HepG2 (cell line): ENCODE measurements at regions of chr12 and their contacts with region 1.

Region 1: DNA sequence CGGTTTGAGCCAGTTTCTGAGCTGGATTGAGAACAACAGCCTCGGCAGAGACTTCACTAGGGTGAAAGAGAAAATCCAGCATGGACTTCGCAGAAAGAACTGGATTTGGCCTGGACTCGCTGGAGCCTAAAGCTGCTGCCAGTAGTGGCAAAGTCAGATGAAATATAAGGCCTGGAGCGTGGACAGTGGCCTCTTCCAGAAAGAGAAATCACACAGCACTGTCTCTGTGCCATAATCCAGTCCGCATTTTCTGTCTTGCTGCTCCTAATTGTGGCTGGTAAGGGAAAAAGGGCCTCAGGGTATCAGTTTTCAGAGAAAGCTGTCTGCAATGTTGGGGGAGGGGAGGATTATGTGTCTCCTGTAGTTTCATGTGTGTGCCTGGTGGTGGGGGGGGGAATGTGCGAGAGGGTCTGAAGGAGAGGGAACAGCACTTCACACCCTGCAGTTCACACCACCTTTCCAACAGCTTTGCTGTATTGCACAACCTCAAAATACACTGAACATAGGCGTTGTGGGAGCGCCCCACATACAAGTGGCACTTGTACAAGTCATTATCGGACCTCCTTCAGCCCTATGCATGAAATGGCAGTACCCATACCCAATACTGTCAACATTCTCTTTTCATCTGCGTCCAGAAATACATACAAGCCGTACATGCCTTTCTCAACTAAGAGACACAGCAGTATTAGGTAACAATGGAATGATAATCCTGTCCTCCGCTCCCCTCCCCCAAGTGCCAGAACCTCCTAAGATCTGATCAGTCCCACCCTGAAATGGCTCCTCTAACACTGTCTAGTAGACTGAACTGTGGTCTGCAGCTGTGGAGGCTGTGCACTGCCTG is 107.5 kb upstream of the ATF7IP start:
- DNase-seq: peak; percentile 95
- ATAC-seq: peak; percentile 86
- H3K4me3 ChIP-seq: peak overlapping the region; percentile 6 to 34 (median 29); a peak in 4 of 6 replicates
- H3K27ac ChIP-seq: peak overlapping the region; percentile 64
- H3K4me1 ChIP-seq: peaks cover 48% of the 10 kb centered on the region
- H3K27me3 ChIP-seq: no peaks in the 10 kb centered on the region
- CTCF ChIP-seq: 0 out of 2 replicates have a peak, but pooled peaks have one; percentile 4
- EP300 ChIP-seq: peak in 1 of 2 experiments; percentile 66; a peak in 1 of 4 replicates
- POLR2A ChIP-seq: no peak
- RAD21 ChIP-seq: peak; percentile 41; the same call in 1 of the 2 replicates

Region 2: GRCh38 chr12:14365294-14366208 is 107.6 kb after region 1 on chr12 and contains the start of gene ATF7IP:
- CTCF ChIA-PET with region 1: interaction called, 5 read pairs
- POLR2A ChIA-PET with region 1: interaction called, 7 read pairs
- in situ Hi-C with region 1: no loop called
- intact Hi-C with region 1: loop called (anchors 1 kb)
- DNase-seq: peak; percentile 29
- ATAC-seq: peak; percentile 75
- H3K4me3 ChIP-seq: peak within 1 kb of the TSS; percentile 41 to 55 (median 49)
- H3K27ac ChIP-seq: peak within 1 kb of the TSS; percentile 34
- H3K4me1 ChIP-seq: peaks cover 19% of the 10 kb centered on the region; the same call in 1 of the 2 replicates
- H3K27me3 ChIP-seq: no peaks in the 10 kb centered on the region
- CTCF ChIP-seq: peak; percentile 3; the same call in 1 of the 2 replicates
- EP300 ChIP-seq: peak in 1 of 2 experiments; percentile 88; a peak in 2 of 4 replicates
- POLR2A ChIP-seq: no peak
- RAD21 ChIP-seq: no peak
- total RNA-seq, gene ATF7IP: 11.8 and 15.2 TPM in 2 replicates

Region 3: GRCh38 chr12:14384783-14385638 is 127.1 kb after region 1 on chr12:
- CTCF ChIA-PET with region 1: no interaction called
- POLR2A ChIA-PET with region 1: interaction called, 39 read pairs
- in situ Hi-C with region 1: loop called (anchors 5 kb)
- intact Hi-C with region 1: loop called (anchors 1 kb)
- DNase-seq: peak; percentile 88
- ATAC-seq: peak; percentile 97
- H3K4me3 ChIP-seq: peak overlapping the region; percentile 39 to 53 (median 51); a peak in 5 of 6 replicates
- H3K27ac ChIP-seq: peak overlapping the region; percentile 84
- H3K4me1 ChIP-seq: peaks cover 11% of the 10 kb centered on the region; the same call in 1 of the 2 replicates
- H3K27me3 ChIP-seq: no peaks in the 10 kb centered on the region
- CTCF ChIP-seq: no peak
- EP300 ChIP-seq: peak; percentile 39 to 60; a peak in 2 of 4 replicates
- POLR2A ChIP-seq: peak; percentile 33 to 62; a peak in 3 of 4 replicates
- RAD21 ChIP-seq: 0 out of 2 replicates have a peak, but pooled peaks have one; percentile 17

Region 4: DNA sequence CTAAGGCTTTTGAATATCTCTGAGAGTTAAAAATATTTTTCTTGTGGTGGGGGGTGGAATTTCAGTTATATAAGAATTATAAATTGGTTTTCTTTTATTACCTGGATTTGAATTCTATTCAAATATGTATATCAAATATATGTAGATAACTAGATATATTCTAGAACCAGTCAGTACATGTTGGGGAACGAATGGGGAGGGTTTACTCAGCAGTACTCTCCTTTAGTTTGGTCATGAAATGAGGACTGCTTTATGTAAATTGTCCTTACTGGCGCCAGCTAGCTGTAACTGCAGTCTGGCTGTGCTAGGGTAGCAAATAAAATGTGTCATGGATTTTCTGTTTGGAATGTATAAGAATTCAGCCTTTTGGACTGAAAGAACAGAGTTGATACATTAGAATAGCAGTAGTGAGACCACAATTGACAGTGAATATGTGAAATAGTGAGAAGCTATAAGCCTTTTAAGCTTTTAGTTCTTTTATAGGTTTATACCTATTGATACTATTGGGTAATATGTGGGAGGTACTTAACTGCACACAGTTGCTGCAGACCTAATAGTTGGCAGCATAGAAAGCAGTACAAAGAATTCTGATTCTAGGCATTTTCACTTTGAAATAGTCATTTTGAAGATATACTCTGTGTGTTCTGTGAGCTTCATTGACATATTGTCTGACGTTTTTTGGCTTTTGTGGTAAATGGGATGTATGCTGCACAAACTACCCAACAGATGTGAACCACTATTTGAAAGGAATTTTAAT is 136.5 kb after region 1 on chr12:
- CTCF ChIA-PET with region 1: no interaction called
- POLR2A ChIA-PET with region 1: interaction called, 10 read pairs
- in situ Hi-C with region 1: loop called (anchors 5 kb)
- intact Hi-C with region 1: loop called (anchors 1 kb)
- DNase-seq: peak; percentile 69
- ATAC-seq: peak; percentile 95
- H3K4me3 ChIP-seq: peak overlapping the region in 1 of 3 experiments; percentile 22; a peak in 1 of 6 replicates
- H3K27ac ChIP-seq: peak overlapping the region; percentile 49
- H3K4me1 ChIP-seq: peaks cover 10% of the 10 kb centered on the region
- H3K27me3 ChIP-seq: no peaks in the 10 kb centered on the region
- CTCF ChIP-seq: no peak
- EP300 ChIP-seq: peak in 1 of 2 experiments; percentile 33; a peak in 1 of 4 replicates
- POLR2A ChIP-seq: no peak
- RAD21 ChIP-seq: no peak

Region 5: GRCh38 chr12:14454098-14454907 is 196.3 kb after region 1 on chr12:
- CTCF ChIA-PET with region 1: interaction called, 8 read pairs
- POLR2A ChIA-PET with region 1: no interaction called
- in situ Hi-C with region 1: no loop called
- intact Hi-C with region 1: loop called (anchors 1 kb)
- DNase-seq: peak; percentile 65
- ATAC-seq: peak; percentile 98
- H3K4me3 ChIP-seq: no peak overlapping the region
- H3K27ac ChIP-seq: no peak overlapping the region
- H3K4me1 ChIP-seq: no peaks in the 10 kb centered on the region
- H3K27me3 ChIP-seq: no peaks in the 10 kb centered on the region
- CTCF ChIP-seq: peak; percentile 70
- EP300 ChIP-seq: no peak
- POLR2A ChIP-seq: no peak
- RAD21 ChIP-seq: peak; percentile 78